CD4-positive, alpha-beta memory T cell (primary cell): ENCODE measurements at regions of chr7 and their contacts with region 1.

Region 1: DNA sequence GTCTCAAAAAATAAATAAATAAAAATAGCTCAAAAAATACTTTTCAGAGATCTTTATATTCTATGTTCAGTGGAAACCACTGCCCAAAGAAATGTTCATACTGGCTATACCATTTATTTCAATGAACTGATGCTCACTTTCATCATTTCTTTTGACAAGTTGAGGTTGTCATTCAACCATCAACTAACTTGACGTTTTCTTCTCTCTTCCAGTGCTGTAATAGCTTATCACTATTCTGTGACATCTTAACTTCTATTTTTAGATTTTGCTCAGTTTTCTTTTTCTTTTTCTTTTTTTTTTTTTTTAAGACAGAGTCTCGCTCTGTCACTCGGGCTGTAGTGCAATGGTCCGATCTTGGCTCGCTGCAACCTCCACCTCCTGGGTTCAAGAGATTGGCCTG is 8.7 kb upstream of the CTAGE4 start:
- DNase-seq: no peak
- H3K4me3 ChIP-seq: no peak overlapping the region
- H3K4me3 Mint-ChIP-seq: no peak overlapping the region
- H3K27ac ChIP-seq: no peak overlapping the region
- H3K27ac Mint-ChIP-seq: no peak overlapping the region
- H3K4me1 ChIP-seq: no peaks in the 10 kb centered on the region
- H3K4me1 Mint-ChIP-seq: no peaks in the 10 kb centered on the region
- H3K27me3 ChIP-seq: no peaks in the 10 kb centered on the region
- H3K27me3 Mint-ChIP-seq: peaks cover 9 to 10% of the 10 kb centered on the region in 2 donors

Region 2: GRCh38 chr7:143958781-143959180 is 215.8 kb before region 1 on chr7:
- CTCF ChIA-PET with region 1: no interaction called
- POLR2A ChIA-PET with region 1: no interaction called
- intact Hi-C with region 1: no loop called
- DNase-seq: no peak
- H3K4me3 ChIP-seq: no peak overlapping the region
- H3K4me3 Mint-ChIP-seq: no peak overlapping the region
- H3K27ac ChIP-seq: no peak overlapping the region
- H3K27ac Mint-ChIP-seq: no peak overlapping the region
- H3K4me1 ChIP-seq: no peaks in the 10 kb centered on the region
- H3K4me1 Mint-ChIP-seq: no peaks in the 10 kb centered on the region
- H3K27me3 ChIP-seq: no peaks in the 10 kb centered on the region
- H3K27me3 Mint-ChIP-seq: peaks cover 8 to 10% of the 10 kb centered on the region in 2 donors

Region 3: DNA sequence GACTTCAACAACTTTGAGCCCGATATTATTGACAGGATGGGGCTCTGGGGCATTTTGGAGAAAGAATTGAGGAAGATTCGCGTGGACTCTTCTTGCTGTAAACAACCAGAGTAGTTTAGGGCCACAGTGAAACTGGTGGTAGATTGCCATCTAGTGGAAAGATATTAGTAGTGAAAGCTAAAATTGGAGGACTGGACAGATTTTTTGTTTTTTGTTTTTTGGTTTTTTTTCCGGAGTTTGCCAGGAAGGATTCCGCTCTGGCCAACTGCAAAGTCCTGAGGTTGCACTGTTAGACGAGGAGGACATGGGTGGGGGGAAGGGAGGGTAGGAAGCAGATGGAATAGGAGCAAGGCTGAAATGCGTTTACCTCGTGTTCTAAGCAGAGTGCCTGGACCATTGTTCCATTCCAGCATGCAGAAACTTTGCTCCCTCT is 217.2 kb after region 1 on chr7:
- CTCF ChIA-PET with region 1: interaction called, 27 read pairs
- POLR2A ChIA-PET with region 1: no interaction called
- intact Hi-C with region 1: no loop called
- DNase-seq: peak; percentile 40 to 62 (median 60)
- H3K4me3 ChIP-seq: no peak overlapping the region
- H3K4me3 Mint-ChIP-seq: peak overlapping the region in 7 of 8 donors; percentile 26 to 82 (median 61)
- H3K27ac ChIP-seq: no peak overlapping the region
- H3K27ac Mint-ChIP-seq: peak overlapping the region in 4 of 7 donors; percentile 1 to 84 (median 18)
- H3K4me1 ChIP-seq: no peaks in the 10 kb centered on the region
- H3K4me1 Mint-ChIP-seq: peaks cover 3 to 6% (median 5%) of the 10 kb centered on the region in 4 donors
- H3K27me3 ChIP-seq: no peaks in the 10 kb centered on the region
- H3K27me3 Mint-ChIP-seq: peaks cover 0 to 2% of the 10 kb centered on the region in 2 donors